ENCODE measurements at regions of chr16 and their contacts with region 1.

Region 1: DNA sequence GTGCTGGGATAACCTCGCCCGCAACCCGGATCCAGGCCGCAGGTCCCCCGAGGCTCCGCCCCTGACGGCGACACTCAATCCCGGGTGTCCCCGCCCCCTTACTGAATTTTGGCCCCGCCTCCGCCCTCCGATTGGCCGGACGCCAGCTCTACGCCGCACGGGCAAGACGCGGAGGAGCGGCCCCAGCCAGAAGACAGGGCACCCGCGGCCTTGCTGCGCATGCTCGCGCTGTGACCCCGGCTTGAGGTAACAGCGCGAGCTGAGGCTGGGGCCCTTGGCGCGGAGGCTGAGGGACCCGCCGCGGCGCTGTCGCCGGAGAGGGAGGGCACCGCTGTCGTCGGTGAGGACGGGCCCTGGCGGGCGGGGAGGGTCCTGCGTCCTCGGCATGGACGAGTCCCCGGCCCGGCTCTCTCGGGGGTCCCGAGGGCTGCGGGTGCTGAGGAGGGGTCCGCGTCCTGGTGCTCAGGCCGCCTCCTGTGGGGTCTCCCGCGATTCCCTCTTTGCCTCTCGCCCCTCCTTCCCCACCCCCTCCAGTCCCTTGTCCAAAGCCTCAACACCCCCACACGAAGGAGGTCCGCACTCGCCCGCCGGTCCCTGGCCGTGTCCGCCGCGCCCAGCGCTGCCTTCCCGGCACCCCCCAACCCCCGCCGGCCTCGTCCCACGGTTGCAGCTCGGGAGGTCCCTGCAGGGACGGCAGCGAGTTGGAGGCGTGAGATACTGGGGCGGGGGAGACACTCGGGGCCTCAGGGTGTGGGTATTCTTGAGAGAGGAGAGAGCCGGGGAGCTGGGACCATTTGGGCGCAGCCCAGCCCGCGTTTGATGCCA is at the start of gene FLYWCH2:
- DNase-seq: peak; percentile 90
- ATAC-seq: peak; percentile 89
- H3K4me3 ChIP-seq: peak within 1 kb of the TSS; percentile 90
- H3K27ac ChIP-seq: peak within 1 kb of the TSS; percentile 69
- H3K4me1 ChIP-seq: peaks cover 8% of the 10 kb centered on the region
- H3K27me3 ChIP-seq: no peaks in the 10 kb centered on the region
- CTCF ChIP-seq: peak in 1 of 3 experiments; percentile 8; a peak in 1 of 6 replicates
- EP300 ChIP-seq: no peak
- POLR2A ChIP-seq: peak; percentile 93
- RAD21 ChIP-seq: no peak
- polyA plus RNA-seq, gene FLYWCH2: 0.27 to 1.8 TPM

Region 2: GRCh38 chr16:2897113-2897512 is 13.9 kb after region 1 on chr16:
- CTCF ChIA-PET with region 1: interaction called, 8 read pairs
- POLR2A ChIA-PET with region 1: interaction called, 20 read pairs
- RAD21 ChIA-PET with region 1: interaction called, 12 read pairs
- SMC1A ChIA-PET with region 1: interaction called, 9 read pairs
- in situ Hi-C with region 1: no loop called
- intact Hi-C with region 1: no loop called
- DNase-seq: no peak
- ATAC-seq: peak; percentile 90
- H3K4me3 ChIP-seq: no peak overlapping the region
- H3K27ac ChIP-seq: no peak overlapping the region
- H3K4me1 ChIP-seq: no peaks in the 10 kb centered on the region
- H3K27me3 ChIP-seq: no peaks in the 10 kb centered on the region
- CTCF ChIP-seq: no peak
- EP300 ChIP-seq: no peak
- POLR2A ChIP-seq: no peak
- RAD21 ChIP-seq: no peak

Region 3: DNA sequence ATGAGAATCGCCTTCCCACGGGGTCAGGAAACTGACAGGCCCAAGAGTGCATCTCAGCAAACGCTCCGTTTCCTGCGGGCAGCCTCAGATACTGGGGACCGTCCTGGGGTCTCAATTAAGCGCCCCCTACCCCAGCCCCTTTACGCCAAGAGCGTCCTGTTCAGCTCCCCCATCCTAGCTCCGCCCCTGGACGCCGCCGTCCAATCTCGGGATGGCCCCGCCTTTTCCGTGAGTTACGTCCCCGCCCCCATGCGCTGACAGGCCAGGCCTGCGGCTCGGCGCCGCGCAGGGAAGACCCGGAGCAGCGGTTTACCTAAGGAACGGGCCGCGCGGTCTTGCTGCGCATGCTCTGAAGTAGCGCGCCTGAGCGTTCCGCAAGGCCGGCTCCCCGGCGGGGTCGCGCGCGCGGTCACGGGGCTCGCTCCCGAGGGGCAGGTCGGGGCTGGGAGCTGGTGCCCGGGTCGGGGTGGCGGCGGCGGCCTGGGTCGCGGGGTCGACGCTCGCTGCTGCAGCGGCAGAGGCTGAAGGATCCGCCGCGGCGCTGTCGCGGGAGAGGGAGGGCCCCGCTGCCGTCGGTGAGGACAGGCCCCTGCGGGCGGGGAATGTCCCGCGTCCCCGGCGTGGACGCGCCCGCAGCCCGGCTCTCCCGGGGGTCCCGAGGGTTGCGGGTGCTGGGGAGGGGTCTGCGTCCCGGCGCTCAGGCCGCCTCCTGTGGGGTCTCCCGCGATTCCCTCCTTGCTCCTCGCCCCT is 28.5 kb after region 1 on chr16 and contains the start of gene FLYWCH1:
- CTCF ChIA-PET with region 1: interaction called, 11 read pairs
- POLR2A ChIA-PET with region 1: interaction called, 12 read pairs
- RAD21 ChIA-PET with region 1: interaction called, 19 read pairs
- SMC1A ChIA-PET with region 1: interaction called, 5 read pairs
- in situ Hi-C with region 1: loop called (anchors 5 kb)
- intact Hi-C with region 1: no loop called
- DNase-seq: peak; percentile 88
- ATAC-seq: peak; percentile 98
- H3K4me3 ChIP-seq: peak within 1 kb of the TSS; percentile 97
- H3K27ac ChIP-seq: peak within 1 kb of the TSS; percentile 54
- H3K4me1 ChIP-seq: peaks cover 3% of the 10 kb centered on the region; the same call in 1 of the 2 replicates
- H3K27me3 ChIP-seq: no peaks in the 10 kb centered on the region
- CTCF ChIP-seq: no peak
- EP300 ChIP-seq: no peak
- POLR2A ChIP-seq: peak; percentile 86
- RAD21 ChIP-seq: no peak
- polyA plus RNA-seq, gene FLYWCH1: 0.47 to 0.60 TPM

Region 4: GRCh38 chr16:3112058-3112880 is 229.0 kb after region 1 on chr16 and contains the start of gene ZNF205:
- CTCF ChIA-PET with region 1: no interaction called
- POLR2A ChIA-PET with region 1: no interaction called
- RAD21 ChIA-PET with region 1: no interaction called
- SMC1A ChIA-PET with region 1: no interaction called
- in situ Hi-C with region 1: no loop called
- intact Hi-C with region 1: no loop called
- DNase-seq: no peak
- ATAC-seq: peak; percentile 44
- H3K4me3 ChIP-seq: peak within 1 kb of the TSS; percentile 55
- H3K27ac ChIP-seq: no peak within 1 kb of the TSS; the same call in 1 of the 2 replicates
- H3K4me1 ChIP-seq: no peaks in the 10 kb centered on the region; the same call in 1 of the 2 replicates
- H3K27me3 ChIP-seq: no peaks in the 10 kb centered on the region; a peak in 1 of 4 replicates
- CTCF ChIP-seq: no peak
- EP300 ChIP-seq: no peak
- POLR2A ChIP-seq: no peak
- RAD21 ChIP-seq: no peak
- polyA plus RNA-seq, gene ZNF205: not detected

Measured in GM12878 (cell line).